Mammary epithelial cell (primary cell): ENCODE measurements at regions of chr6 and their contacts with region 1.

Region 1: GRCh38 chr6:138031850-138032249 is 75.4 kb downstream of the PERP start:
- DNase-seq: peak; percentile 95
- H3K4me3 ChIP-seq: no peak overlapping the region
- H3K27ac ChIP-seq: peak overlapping the region; percentile 100
- H3K4me1 ChIP-seq: peaks cover 73% of the 10 kb centered on the region
- H3K27me3 ChIP-seq: no peaks in the 10 kb centered on the region
- CTCF ChIP-seq: no peak

Region 2: GRCh38 chr6:137903933-137904821 is 127.7 kb before region 1 on chr6:
- CTCF ChIA-PET with region 1: no interaction called
- dilution Hi-C with region 1: no loop called
- in situ Hi-C with region 1: no loop called
- intact Hi-C with region 1: no loop called
- DNase-seq: peak; percentile 55
- H3K4me3 ChIP-seq: no peak overlapping the region
- H3K27ac ChIP-seq: no peak overlapping the region
- H3K4me1 ChIP-seq: no peaks in the 10 kb centered on the region
- H3K27me3 ChIP-seq: no peaks in the 10 kb centered on the region
- CTCF ChIP-seq: no peak

Region 3: GRCh38 chr6:138007014-138007472 is 24.8 kb before region 1 on chr6:
- CTCF ChIA-PET with region 1: interaction called, 7 read pairs
- dilution Hi-C with region 1: no loop called
- in situ Hi-C with region 1: no loop called
- intact Hi-C with region 1: loop called (anchors 1 kb)
- DNase-seq: peak; percentile 85
- H3K4me3 ChIP-seq: no peak overlapping the region
- H3K27ac ChIP-seq: peak overlapping the region; percentile 64
- H3K4me1 ChIP-seq: peaks cover 20% of the 10 kb centered on the region
- H3K27me3 ChIP-seq: no peaks in the 10 kb centered on the region
- CTCF ChIP-seq: peak; percentile 58 to 78

Region 4: GRCh38 chr6:138088330-138088766 is 56.5 kb after region 1 on chr6:
- CTCF ChIA-PET with region 1: no interaction called
- dilution Hi-C with region 1: no loop called
- in situ Hi-C with region 1: no loop called
- intact Hi-C with region 1: loop called (anchors 1 kb)
- DNase-seq: peak; percentile 95
- H3K4me3 ChIP-seq: peak overlapping the region in 2 of 3 experiments; percentile 3 to 9
- H3K27ac ChIP-seq: peak overlapping the region; percentile 98
- H3K4me1 ChIP-seq: peaks cover 41% of the 10 kb centered on the region
- H3K27me3 ChIP-seq: no peaks in the 10 kb centered on the region
- CTCF ChIP-seq: no peak